Head of caudate nucleus (tissue), 42 donors: ENCODE measurements at regions of chrX and their contacts with region 1.

Region 1: DNA sequence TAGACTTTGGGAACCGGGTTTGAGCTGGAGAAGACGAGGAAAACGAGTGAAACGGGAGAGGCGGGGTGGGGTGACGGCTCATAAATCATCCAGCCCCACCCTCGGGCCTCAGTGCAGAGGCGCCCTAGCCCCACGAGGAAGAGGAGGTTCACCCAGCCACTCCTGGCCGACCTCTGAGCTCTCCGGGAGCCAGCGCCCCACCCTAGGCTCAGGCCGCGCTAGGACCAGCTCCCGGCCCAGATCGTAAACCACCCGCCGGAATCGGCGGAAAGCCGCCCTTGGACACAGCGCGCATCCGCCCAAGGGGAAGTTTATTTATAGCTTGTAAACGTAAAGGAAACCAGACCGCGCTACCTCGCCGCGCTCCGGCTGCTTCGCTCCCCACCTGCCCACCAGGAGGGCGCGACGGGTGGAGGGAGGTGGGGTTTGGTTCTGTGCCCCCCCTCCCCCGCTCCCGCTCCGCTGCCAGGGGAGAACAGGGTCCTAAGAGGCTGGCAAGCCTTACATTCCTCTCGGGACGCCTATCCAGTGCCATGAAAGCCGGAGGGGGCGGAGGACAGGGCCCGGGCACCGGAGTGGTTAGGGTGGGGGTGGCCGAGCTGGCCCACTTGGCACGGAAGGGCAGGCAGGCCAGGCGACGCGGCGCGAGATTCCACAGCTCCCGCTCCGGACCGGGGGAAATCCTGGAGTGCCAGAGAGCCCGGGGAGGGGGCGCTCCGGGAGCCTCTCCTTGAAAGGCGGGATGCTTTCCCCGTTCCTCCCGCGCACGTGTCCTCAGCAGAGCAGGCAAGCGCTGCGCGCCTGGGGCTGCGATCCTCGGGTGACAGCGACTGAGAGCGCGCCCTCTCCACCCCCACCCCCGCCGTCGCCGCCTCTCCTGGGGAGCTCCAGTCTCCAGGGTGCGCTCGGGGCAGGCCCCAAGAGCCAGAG is 84.2 kb downstream of the BCOR start:
- DNase-seq: peak; percentile 13 to 80 (median 65)

Region 2: DNA sequence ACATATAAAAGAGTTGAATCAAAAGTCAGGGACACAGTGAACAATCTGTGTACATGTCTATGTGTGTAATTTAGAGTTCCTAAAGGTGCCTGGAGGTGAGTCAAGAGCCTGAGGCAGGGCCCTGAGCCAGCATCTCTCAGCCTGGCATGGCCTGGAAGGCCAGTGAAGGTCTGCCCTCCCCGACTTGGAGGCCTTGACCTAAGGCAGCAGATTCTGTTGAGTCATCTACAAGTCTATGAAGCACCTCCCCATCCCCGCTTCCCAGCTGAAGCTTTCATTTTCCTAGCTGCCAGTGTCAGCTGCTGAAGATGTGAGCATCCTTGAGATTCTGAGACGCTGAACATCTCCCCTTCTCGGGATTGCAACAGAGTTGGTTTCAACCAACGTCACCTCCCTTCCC is 499.7 kb before region 1 on chrX:
- intact Hi-C with region 1: no loop called
- DNase-seq: no peak

Region 3: DNA sequence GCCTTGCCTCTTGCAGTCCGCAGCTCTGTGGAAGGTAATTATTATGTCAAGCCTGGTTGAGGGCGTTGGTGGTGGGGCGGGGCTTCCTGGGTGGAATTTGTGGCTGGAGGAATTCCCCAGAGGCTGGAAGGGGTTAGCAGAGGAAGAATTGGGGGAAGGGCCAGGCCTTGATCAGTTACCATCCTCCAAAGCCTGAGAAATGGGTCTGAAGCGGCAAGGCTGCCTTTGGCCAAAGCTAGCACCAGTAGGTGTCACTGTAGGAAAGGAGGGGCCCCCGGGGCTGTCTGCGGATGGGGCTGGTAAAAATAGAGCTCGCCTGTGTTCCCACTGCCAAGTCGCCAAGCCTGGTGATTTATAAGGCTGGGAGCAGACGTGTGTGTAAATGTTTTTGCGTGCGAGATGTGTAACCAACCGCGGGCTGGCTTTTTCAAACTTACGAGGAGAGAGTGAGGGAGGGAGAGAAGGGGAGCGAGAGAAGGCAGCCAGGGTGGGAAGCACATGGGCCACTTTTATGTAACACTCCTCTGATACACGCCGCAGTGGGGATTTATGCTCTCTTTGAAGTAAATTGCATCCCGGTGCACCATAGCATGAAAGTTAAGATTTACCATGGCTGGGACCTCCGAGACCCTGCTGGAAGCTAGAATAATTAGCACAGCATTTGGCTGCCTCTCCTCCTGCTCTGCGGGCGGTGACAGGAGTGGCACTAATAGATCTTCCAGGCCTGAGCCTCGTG is 282.7 kb before region 1 on chrX:
- intact Hi-C with region 1: loop called (anchors 5 kb)
- DNase-seq: peak; percentile 40 to 84 (median 63)

Region 4: DNA sequence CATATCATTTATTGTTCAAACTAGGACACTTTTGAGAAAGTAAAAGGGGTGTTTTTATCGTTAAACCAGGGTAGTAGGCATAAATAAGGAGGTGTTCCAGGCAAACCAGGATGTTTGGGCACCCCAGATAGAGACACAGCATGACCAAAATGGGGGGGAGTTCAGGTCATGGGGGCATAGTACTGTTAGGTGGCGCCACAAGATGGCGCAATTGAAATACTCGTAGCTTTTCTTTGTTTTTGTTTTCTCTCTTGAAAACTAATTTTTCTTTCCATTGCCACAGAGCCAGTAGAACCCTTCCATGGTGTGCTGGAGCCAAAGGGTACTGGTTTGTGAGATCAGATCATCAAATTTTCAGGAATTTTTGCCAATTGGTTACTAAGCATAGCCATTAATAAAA is 199.1 kb before region 1 on chrX:
- intact Hi-C with region 1: loop called (anchors 10 kb)
- DNase-seq: peak in 7 of 42 donors; percentile 15 to 59 (median 23)

Region 5: DNA sequence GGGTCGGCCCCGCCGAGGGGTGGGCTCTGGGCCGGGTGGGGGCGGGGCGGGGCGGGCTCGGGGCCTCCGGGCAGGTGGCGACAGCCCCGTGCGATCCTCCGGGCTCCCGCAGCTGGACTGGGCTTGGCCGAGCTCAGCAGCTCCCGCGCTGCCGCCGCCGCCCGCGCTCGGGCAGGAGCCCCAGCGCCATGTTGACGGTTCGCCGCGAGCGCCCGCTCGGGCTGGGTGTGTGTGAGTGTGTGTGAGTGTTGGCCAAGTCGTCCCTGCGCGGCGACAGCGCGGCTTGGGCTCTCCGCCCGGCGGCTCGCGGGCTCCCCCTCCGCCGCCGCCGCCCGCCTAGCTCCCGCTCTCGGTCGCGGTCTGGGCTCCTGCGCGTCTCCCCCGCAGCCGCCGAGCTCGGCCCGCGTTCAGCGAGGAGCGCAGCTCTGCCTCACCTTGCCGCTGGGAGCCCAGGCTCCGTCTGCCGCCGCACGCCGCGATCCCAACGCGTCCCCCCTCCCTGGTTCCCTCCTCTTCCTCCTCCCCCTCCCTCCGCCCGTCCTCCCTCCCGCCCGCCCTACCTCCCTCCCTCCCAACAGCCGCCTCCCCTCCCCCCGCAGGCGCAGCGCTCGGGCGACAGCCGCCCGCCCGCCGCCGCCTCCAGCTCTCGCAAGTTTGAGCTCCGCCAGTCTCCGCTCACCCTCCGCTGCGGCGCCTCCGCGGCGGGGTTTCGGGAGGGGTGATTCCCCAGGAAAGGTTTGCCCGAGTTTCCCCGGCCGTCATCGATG is 84.1 kb after region 1 on chrX and contains the start of gene BCOR:
- intact Hi-C with region 1: loop called (anchors 5 kb)
- DNase-seq: peak in 35 of 42 donors; percentile 49 to 84 (median 70)

Region 6: DNA sequence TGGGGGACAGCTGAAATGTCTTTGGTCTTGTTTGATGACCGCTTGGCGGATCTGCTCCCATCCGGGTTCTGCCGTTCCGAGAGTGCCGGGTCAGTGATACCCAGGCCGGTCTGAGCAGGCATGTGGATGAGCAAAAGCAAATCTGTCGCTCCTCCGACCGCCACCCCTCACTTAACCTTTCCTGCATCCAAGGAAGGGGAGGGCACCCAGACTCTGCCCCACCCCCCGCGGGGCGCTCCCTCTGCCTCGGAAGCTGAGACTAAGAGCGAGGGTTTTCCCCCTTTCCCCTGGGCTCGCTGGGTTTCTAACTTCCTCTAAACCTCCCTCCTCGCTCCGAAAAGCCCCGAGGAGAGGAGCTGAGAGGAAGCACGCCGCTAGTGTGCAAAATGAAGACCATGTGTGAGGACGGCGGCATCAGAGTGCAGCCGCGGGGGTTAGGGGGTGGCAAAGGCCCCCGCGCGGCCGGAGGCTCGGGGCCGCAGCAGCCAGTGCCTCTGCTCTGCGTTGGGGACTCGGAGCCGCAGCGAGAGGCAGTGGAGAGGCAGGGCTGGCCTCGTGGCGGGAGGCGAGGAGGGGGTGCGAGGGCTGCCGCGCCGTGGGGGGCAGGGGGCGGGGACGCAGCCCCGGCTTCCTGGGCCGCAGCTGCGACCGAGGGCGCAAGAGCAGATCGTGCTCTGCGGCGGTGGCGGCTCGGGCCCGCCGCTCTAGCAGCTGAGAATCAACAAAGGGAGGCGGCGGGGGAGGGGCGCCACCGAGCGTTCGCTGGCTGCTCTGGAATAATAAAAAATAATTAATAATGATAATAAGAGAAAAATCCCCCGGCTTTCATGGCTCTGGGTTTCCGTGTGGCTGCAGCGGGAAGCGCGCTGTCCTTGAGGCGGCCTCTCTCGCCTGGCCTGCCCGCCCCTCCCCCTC is 140.1 kb after region 1 on chrX:
- intact Hi-C with region 1: loop called (anchors 10 kb)
- DNase-seq: peak in 36 of 42 donors; percentile 40 to 84 (median 64)

Region 7: GRCh38 chrX:40273356-40274050 is 260.0 kb after region 1 on chrX:
- intact Hi-C with region 1: no loop called
- DNase-seq: peak in 37 of 42 donors; percentile 5 to 58 (median 26)